Gastrocnemius medialis (tissue), 4 donors: ENCODE measurements at regions of chr16 and their contacts with region 1.

Region 1: GRCh38 chr16:55323637-55324490 is at the start of gene IRX6:
- DNase-seq: peak in 1 of 2 donors; percentile 66
- ATAC-seq: peak in 1 of 2 donors; percentile 75
- H3K4me3 ChIP-seq: peak within 1 kb of the TSS; percentile 25 to 58 (median 50)
- H3K27ac ChIP-seq: peak within 1 kb of the TSS in 3 of 4 donors; percentile 38 to 73 (median 56)
- H3K4me1 ChIP-seq: peaks cover 0 to 4% of the 10 kb centered on the region in 2 donors
- H3K27me3 ChIP-seq: peaks cover 24 to 41% (median 29%) of the 10 kb centered on the region in 3 donors
- CTCF ChIP-seq: peak in 3 of 5 experiments; percentile 43 to 73 (median 55)
- POLR2A ChIP-seq: peak in 1 of 2 donors; percentile 9
- total RNA-seq, gene IRX6: 0.39 to 3.8 (median 1.4) TPM

Region 2: GRCh38 chr16:55120408-55120807 is 203.5 kb before region 1 on chr16:
- in situ Hi-C with region 1: no loop called
- intact Hi-C with region 1: loop called (anchors 2 kb)
- DNase-seq: no peak
- ATAC-seq: no peak
- H3K4me3 ChIP-seq: no peak overlapping the region
- H3K27ac ChIP-seq: no peak overlapping the region
- H3K4me1 ChIP-seq: no peaks in the 10 kb centered on the region
- H3K27me3 ChIP-seq: no peaks in the 10 kb centered on the region
- CTCF ChIP-seq: no peak
- POLR2A ChIP-seq: no peak

Region 3: GRCh38 chr16:55294931-55295342 is 28.9 kb before region 1 on chr16:
- in situ Hi-C with region 1: no loop called
- intact Hi-C with region 1: loop called (anchors 2 kb)
- DNase-seq: peak; percentile 27
- ATAC-seq: peak; percentile 45 to 61
- H3K4me3 ChIP-seq: no peak overlapping the region
- H3K27ac ChIP-seq: peak overlapping the region; percentile 29 to 70 (median 36)
- H3K4me1 ChIP-seq: peaks cover 4 to 7% of the 10 kb centered on the region in 2 donors
- H3K27me3 ChIP-seq: no peaks in the 10 kb centered on the region
- CTCF ChIP-seq: no peak
- POLR2A ChIP-seq: no peak

Region 4: GRCh38 chr16:55370762-55371482 is 47.1 kb after region 1 on chr16:
- in situ Hi-C with region 1: no loop called
- intact Hi-C with region 1: loop called (anchors 5 kb)
- DNase-seq: peak; percentile 48 to 49
- ATAC-seq: peak; percentile 76 to 83
- H3K4me3 ChIP-seq: no peak overlapping the region
- H3K27ac ChIP-seq: no peak overlapping the region
- H3K4me1 ChIP-seq: peaks cover 0 to 2% of the 10 kb centered on the region in 2 donors
- H3K27me3 ChIP-seq: peaks cover 0 to 17% (median 3%) of the 10 kb centered on the region in 3 donors
- CTCF ChIP-seq: peak in 4 of 5 experiments; percentile 38 to 58 (median 48)
- POLR2A ChIP-seq: no peak